B cell (primary cell): ENCODE measurements at regions of chr18 and their contacts with region 1.

Region 1: GRCh38 chr18:32919799-32920198 is 147.0 kb upstream of the KLHL14 start:
- DNase-seq: peak; percentile 87
- ATAC-seq: peak; percentile 99
- H3K4me3 ChIP-seq: no peak overlapping the region
- H3K4me3 Mint-ChIP-seq: peak overlapping the region; percentile 49
- H3K27ac ChIP-seq: peak overlapping the region in 1 of 2 donors; percentile 24
- H3K27ac Mint-ChIP-seq: no peak overlapping the region
- H3K4me1 ChIP-seq: peaks cover 43 to 52% of the 10 kb centered on the region in 2 donors
- H3K4me1 Mint-ChIP-seq: peaks cover 44% of the 10 kb centered on the region
- H3K27me3 ChIP-seq: no peaks in the 10 kb centered on the region
- H3K27me3 Mint-ChIP-seq: no peaks in the 10 kb centered on the region
- CTCF ChIP-seq: peak; percentile 97

Region 2: DNA sequence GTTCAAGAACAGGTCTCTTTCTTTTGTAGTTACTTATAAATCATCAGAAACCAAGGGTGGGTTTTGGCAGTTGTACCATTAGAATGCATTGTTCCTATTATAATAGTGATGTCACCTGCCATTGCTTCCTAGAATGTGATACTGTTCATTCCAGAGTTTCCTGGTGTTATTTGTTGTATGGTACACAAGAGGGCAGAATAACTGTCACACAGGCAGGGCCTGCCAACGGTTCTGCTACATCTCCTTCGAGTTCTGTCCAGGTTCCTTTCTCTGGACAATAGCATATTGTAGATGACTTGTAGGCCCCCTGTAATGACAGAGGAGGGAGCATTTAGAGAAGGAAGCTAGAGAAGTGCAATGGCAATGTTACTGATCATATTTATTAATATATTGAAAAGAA is 245.3 kb before region 1 on chr18:
- CTCF ChIA-PET with region 1: interaction called, 10 read pairs
- POLR2A ChIA-PET with region 1: no interaction called
- intact Hi-C with region 1: no loop called
- DNase-seq: no peak
- ATAC-seq: no peak
- H3K4me3 ChIP-seq: no peak overlapping the region
- H3K4me3 Mint-ChIP-seq: no peak overlapping the region
- H3K27ac ChIP-seq: no peak overlapping the region
- H3K27ac Mint-ChIP-seq: no peak overlapping the region
- H3K4me1 ChIP-seq: no peaks in the 10 kb centered on the region
- H3K4me1 Mint-ChIP-seq: no peaks in the 10 kb centered on the region
- H3K27me3 ChIP-seq: no peaks in the 10 kb centered on the region
- H3K27me3 Mint-ChIP-seq: no peaks in the 10 kb centered on the region
- CTCF ChIP-seq: no peak

Region 3: GRCh38 chr18:32899819-32900218 is 20.0 kb before region 1 on chr18:
- CTCF ChIA-PET with region 1: interaction called, 5 read pairs
- POLR2A ChIA-PET with region 1: no interaction called
- intact Hi-C with region 1: loop called (anchors 2 kb)
- DNase-seq: no peak
- ATAC-seq: no peak
- H3K4me3 ChIP-seq: no peak overlapping the region
- H3K4me3 Mint-ChIP-seq: no peak overlapping the region
- H3K27ac ChIP-seq: no peak overlapping the region
- H3K27ac Mint-ChIP-seq: no peak overlapping the region
- H3K4me1 ChIP-seq: peaks cover 15 to 19% of the 10 kb centered on the region in 2 donors
- H3K4me1 Mint-ChIP-seq: peaks cover 25% of the 10 kb centered on the region
- H3K27me3 ChIP-seq: no peaks in the 10 kb centered on the region
- H3K27me3 Mint-ChIP-seq: no peaks in the 10 kb centered on the region
- CTCF ChIP-seq: no peak